ENCODE measurements at regions of chr1 and their contacts with region 1.

Region 1: DNA sequence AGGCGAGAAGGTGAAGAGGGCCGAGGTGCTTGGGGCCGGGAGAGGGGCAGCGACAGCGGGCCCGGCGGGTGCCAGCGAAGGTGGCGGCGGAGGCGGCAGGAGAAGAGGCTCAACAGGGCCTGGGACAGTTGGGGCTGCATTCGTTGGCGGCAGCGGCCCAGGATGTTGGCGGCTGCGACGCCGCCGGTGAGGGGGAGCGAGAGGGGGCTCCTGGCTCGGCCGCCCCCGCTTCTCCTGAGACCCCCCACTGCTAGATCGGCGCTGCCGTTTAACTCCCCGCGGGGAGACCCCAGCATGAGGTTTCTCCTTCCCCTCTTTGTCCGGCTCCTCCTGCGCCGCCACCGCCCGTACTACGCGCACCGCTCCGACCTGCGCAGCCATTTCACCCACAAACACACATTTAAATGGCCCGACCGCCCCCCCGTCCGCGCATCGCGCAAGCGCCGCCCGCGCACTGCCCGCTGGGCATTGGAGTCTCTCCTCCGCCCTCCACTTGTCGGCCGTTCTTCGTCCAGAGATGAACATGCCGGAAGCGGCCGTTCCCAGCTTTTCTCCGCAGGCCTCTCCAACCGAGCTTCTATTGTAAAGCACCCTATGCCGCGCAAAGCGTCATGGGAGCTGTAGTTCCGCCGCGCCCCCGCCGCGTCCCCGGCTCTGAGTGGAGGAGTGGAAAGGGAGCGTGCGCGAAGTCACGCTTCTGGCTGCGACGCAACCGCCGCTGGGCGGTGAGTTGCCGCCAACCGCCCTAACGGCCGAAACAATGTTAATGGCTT is at the start of gene RSBN1:
- ATAC-seq: peak; percentile 91 to 98 (median 97)
- H3K4me3 ChIP-seq: peak within 1 kb of the TSS; percentile 69 to 90 (median 80)
- H3K27ac ChIP-seq: peak within 1 kb of the TSS; percentile 85 to 93
- H3K4me1 ChIP-seq: peaks cover 10 to 17% of the 10 kb centered on the region in 2 donors
- total RNA-seq, gene RSBN1: 5.1 to 37.1 (median 22.4) TPM

Region 2: DNA sequence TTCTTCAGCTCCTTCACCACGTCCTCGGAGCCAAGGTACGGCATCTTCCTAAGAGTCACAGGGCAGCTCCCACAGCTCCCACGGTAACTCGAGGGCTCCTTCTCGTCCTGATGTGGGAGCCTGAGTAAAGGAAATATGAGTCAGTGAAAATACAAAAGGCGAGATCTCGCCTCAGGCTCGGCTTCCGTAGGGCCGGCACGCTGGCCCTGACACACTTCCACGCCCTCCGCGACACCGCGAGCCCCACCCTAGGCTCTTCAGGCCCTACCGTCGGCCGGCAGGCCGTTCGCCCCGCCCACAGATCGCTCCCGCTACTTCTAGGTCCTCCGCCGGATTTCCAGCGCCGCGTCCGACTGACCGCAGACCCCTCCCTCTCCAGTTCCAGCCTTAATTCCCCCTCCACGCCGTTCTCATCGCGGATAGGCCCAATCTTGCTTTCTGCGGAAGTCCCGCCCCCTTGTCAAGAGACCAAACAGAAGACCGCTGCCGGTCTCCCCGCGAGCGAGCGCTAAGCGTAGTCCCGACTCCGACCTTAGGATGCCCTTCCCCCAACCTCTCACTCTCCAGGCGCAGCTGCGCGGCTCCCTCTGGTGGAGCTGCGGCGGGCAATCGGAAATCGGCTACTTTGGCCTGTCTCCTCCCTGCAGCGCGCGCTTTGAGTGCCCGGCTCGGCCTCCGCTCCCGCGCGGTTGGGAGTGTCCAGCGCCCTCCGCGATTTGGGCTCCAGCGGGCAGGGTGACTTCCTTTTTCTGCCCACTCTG is 92.8 kb after region 1 on chr1 and contains the starts of genes AP4B1 and DCLRE1B:
- in situ Hi-C with region 1: loop called in 1 of 9 experiments (anchors 25 kb)
- ATAC-seq: peak; percentile 88 to 93 (median 92)
- H3K4me3 ChIP-seq: peak within 1 kb of the TSS; percentile 48 to 71 (median 58)
- H3K27ac ChIP-seq: peak within 1 kb of the TSS; percentile 88 to 90
- H3K4me1 ChIP-seq: peaks cover 10 to 14% of the 10 kb centered on the region in 2 donors
- total RNA-seq, gene AP4B1: 15.3 to 45.2 (median 24.7) TPM
- total RNA-seq, gene DCLRE1B: 1.6 to 14.2 (median 6.4) TPM

Measured in motor neuron (in vitro differentiated cells).